ENCODE measurements at regions of chr21 and their contacts with region 1.

Region 1: GRCh38 chr21:29372063-29372802 is 73.5 kb downstream of the BACH1 start:
- DNase-seq: peak in 1 of 3 donors; percentile 58
- ATAC-seq: peak; percentile 91 to 95 (median 92)
- H3K4me3 ChIP-seq: no peak overlapping the region
- H3K27ac ChIP-seq: no peak overlapping the region
- H3K4me1 ChIP-seq: no peaks in the 10 kb centered on the region
- H3K27me3 ChIP-seq: no peaks in the 10 kb centered on the region
- CTCF ChIP-seq: peak; percentile 72 to 89 (median 76)
- POLR2A ChIP-seq: no peak

Region 2: GRCh38 chr21:29091032-29091431 is 281.2 kb before region 1 on chr21:
- intact Hi-C with region 1: loop called (anchors 5 kb)
- DNase-seq: no peak
- ATAC-seq: peak in 1 of 4 donors; percentile 7
- H3K4me3 ChIP-seq: no peak overlapping the region
- H3K27ac ChIP-seq: peak overlapping the region; percentile 38 to 80 (median 66)
- H3K4me1 ChIP-seq: peaks cover 0 to 20% (median 9%) of the 10 kb centered on the region in 4 donors
- H3K27me3 ChIP-seq: no peaks in the 10 kb centered on the region
- CTCF ChIP-seq: no peak
- POLR2A ChIP-seq: no peak

Region 3: DNA sequence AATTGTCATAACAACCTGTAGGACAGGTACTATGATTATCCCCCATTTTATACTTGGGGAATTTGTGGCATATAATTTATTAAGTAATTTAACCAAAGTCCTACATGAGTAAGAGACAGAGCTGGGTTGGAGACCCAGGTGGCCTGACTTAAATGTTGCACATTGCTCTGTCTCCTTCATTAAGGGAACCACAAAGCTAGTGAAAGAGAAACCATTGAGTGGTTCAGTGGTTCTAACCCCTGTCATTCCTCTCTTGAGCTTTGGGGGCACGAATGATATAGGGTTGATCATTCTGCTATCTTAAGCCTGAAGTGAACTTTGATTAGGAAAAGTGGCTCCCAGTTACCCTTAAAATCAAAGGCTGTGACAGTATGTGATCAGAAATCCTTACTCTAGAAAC is 247.0 kb before region 1 on chr21:
- intact Hi-C with region 1: no loop called
- DNase-seq: no peak
- ATAC-seq: no peak
- H3K4me3 ChIP-seq: no peak overlapping the region
- H3K27ac ChIP-seq: no peak overlapping the region
- H3K4me1 ChIP-seq: no peaks in the 10 kb centered on the region
- H3K27me3 ChIP-seq: no peaks in the 10 kb centered on the region
- CTCF ChIP-seq: no peak
- POLR2A ChIP-seq: no peak

Region 4: DNA sequence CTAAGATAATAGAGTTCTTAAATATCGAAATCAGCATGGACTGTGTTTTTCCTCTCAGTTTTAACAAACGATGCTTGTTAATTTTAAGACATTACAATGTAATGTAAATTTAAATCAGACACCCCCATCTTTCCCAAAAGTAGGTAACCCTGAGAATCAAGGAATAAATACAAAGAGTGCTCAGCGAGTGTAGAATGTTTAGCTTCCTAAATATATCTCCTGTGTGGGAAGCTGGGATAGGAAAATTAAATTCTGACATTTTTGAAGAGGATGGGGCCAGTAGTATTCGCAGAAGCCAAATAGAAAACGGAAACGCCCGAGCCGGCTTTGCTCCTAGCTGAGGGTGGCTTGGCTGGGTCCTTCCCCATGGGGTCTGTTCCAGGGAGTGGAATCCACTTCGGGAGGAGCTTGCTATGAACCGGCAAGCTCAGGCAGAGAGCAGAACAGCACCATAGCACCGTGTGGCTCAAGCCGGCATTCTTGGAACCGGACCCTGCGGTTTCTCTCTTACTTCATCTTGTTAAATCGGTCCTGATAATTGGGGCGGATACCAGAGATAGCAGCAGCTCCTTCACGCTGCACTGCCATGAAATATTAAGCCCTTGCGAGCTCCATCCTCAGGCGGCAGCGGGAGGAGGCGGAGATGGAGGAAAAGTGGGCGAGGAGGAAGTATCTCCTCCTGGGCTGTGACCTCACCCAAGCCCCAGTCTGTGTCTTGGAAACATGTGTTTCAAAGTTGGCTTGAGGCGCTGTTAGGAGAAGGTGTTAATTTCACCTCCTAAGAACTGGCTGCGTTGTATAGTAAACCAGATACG is 216.9 kb before region 1 on chr21:
- intact Hi-C with region 1: loop called (anchors 10 kb)
- DNase-seq: no peak
- ATAC-seq: peak; percentile 35 to 47 (median 43)
- H3K4me3 ChIP-seq: peak overlapping the region in 1 of 3 donors; percentile 15
- H3K27ac ChIP-seq: no peak overlapping the region
- H3K4me1 ChIP-seq: no peaks in the 10 kb centered on the region
- H3K27me3 ChIP-seq: no peaks in the 10 kb centered on the region
- CTCF ChIP-seq: no peak
- POLR2A ChIP-seq: no peak

Region 5: GRCh38 chr21:29164325-29164942 is 207.8 kb before region 1 on chr21:
- intact Hi-C with region 1: loop called (anchors 10 kb)
- DNase-seq: no peak
- ATAC-seq: peak; percentile 77 to 90 (median 78)
- H3K4me3 ChIP-seq: peak overlapping the region in 1 of 3 donors; percentile 0
- H3K27ac ChIP-seq: peak overlapping the region in 1 of 3 donors; percentile 9
- H3K4me1 ChIP-seq: peaks cover 0 to 27% (median 3%) of the 10 kb centered on the region in 4 donors
- H3K27me3 ChIP-seq: no peaks in the 10 kb centered on the region
- CTCF ChIP-seq: peak; percentile 65 to 82 (median 73)
- POLR2A ChIP-seq: no peak

Region 6: GRCh38 chr21:29195981-29196669 is 176.1 kb before region 1 on chr21:
- intact Hi-C with region 1: no loop called
- DNase-seq: no peak
- ATAC-seq: peak; percentile 71 to 89 (median 76)
- H3K4me3 ChIP-seq: no peak overlapping the region
- H3K27ac ChIP-seq: peak overlapping the region in 2 of 3 donors; percentile 55 to 79
- H3K4me1 ChIP-seq: peaks cover 0 to 51% (median 16%) of the 10 kb centered on the region in 4 donors
- H3K27me3 ChIP-seq: no peaks in the 10 kb centered on the region
- CTCF ChIP-seq: peak in 2 of 4 donors; percentile 8 to 22
- POLR2A ChIP-seq: no peak

Region 7: GRCh38 chr21:29616352-29616751 is 244.1 kb after region 1 on chr21:
- intact Hi-C with region 1: no loop called
- DNase-seq: no peak
- ATAC-seq: no peak
- H3K4me3 ChIP-seq: no peak overlapping the region
- H3K27ac ChIP-seq: no peak overlapping the region
- H3K4me1 ChIP-seq: no peaks in the 10 kb centered on the region
- H3K27me3 ChIP-seq: no peaks in the 10 kb centered on the region
- CTCF ChIP-seq: no peak
- POLR2A ChIP-seq: no peak